ENCODE measurements at regions of chr1 and their contacts with region 1.

Region 1: GRCh38 chr1:212477014-212477679 is 44.4 kb downstream of the NENF start:
- DNase-seq: peak; percentile 96
- H3K4me3 Mint-ChIP-seq: no peak overlapping the region
- H3K27ac Mint-ChIP-seq: peak overlapping the region; percentile 46
- H3K4me1 Mint-ChIP-seq: peaks cover 17% of the 10 kb centered on the region
- H3K27me3 Mint-ChIP-seq: no peaks in the 10 kb centered on the region
- CTCF ChIP-seq: peak; percentile 99

Region 2: GRCh38 chr1:212396638-212397037 is 80.5 kb before region 1 on chr1:
- CTCF ChIA-PET with region 1: no interaction called
- POLR2A ChIA-PET with region 1: no interaction called
- intact Hi-C with region 1: no loop called
- DNase-seq: peak; percentile 24
- H3K4me3 Mint-ChIP-seq: no peak overlapping the region
- H3K27ac Mint-ChIP-seq: no peak overlapping the region
- H3K4me1 Mint-ChIP-seq: no peaks in the 10 kb centered on the region
- H3K27me3 Mint-ChIP-seq: no peaks in the 10 kb centered on the region
- CTCF ChIP-seq: no peak

Region 3: GRCh38 chr1:212437179-212437798 is 39.9 kb before region 1 on chr1:
- CTCF ChIA-PET with region 1: no interaction called
- POLR2A ChIA-PET with region 1: no interaction called
- intact Hi-C with region 1: no loop called
- DNase-seq: peak; percentile 41
- H3K4me3 Mint-ChIP-seq: no peak overlapping the region
- H3K27ac Mint-ChIP-seq: peak overlapping the region; percentile 33
- H3K4me1 Mint-ChIP-seq: peaks cover 38% of the 10 kb centered on the region
- H3K27me3 Mint-ChIP-seq: no peaks in the 10 kb centered on the region
- CTCF ChIP-seq: no peak

Region 4: GRCh38 chr1:212498283-212499040 is 21.3 kb after region 1 on chr1:
- CTCF ChIA-PET with region 1: interaction called, 43 read pairs
- POLR2A ChIA-PET with region 1: interaction called, 3 read pairs
- intact Hi-C with region 1: no loop called
- DNase-seq: peak; percentile 96
- H3K4me3 Mint-ChIP-seq: no peak overlapping the region
- H3K27ac Mint-ChIP-seq: no peak overlapping the region
- H3K4me1 Mint-ChIP-seq: peaks cover 15% of the 10 kb centered on the region
- H3K27me3 Mint-ChIP-seq: no peaks in the 10 kb centered on the region
- CTCF ChIP-seq: no peak

Region 5: GRCh38 chr1:212558693-212559480 is 81.7 kb after region 1 on chr1:
- CTCF ChIA-PET with region 1: interaction called, 18 read pairs
- POLR2A ChIA-PET with region 1: interaction called, 6 read pairs
- intact Hi-C with region 1: loop called (anchors 1 kb)
- DNase-seq: peak; percentile 98
- H3K4me3 Mint-ChIP-seq: peak overlapping the region; percentile 70
- H3K27ac Mint-ChIP-seq: peak overlapping the region; percentile 99
- H3K4me1 Mint-ChIP-seq: peaks cover 16% of the 10 kb centered on the region
- H3K27me3 Mint-ChIP-seq: no peaks in the 10 kb centered on the region
- CTCF ChIP-seq: no peak

Region 6: DNA sequence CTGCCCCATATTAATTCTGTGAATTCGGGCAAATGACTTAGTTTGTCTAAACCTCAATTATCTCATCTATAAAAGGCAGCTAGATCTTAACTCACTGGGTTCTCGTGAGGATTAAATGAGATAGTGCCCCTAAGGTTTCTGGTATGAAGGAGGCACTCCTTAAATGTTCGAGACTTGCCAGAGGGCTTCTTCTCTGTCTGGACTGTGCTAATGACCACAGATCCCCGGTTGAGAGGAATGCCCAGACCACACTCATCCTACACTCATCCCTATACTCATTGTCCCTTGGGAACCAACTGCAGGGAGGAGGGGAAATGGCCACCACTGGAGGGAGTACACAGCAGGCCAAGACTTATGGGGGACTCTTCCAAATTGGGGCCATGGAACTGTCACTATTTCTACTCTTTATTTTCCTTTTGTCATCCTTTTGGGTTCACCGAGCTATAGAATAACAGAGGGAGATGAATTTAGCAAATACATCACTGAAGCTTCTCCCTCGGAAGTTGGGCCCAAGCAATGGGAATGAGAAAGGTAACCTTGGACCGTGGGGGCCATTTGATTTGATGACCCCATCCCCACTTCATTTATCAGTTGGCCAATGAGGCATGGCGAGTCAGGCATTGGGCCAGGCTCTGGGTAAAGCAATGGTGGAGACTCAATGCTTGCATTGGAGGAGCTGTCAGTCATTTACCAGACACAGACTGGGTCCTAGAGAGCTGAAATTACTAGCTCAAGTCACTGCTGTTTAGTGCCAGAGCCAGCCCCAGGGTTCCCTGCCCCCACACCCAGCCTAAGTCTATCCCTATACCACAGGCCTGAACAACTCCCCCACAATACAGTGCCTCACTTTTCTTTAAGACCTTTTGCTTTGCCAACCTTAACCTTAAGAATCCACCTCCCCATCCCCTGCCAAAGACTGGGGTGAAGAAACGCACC is 136.6 kb after region 1 on chr1:
- CTCF ChIA-PET with region 1: interaction called, 33 read pairs
- POLR2A ChIA-PET with region 1: interaction called, 94 read pairs
- intact Hi-C with region 1: loop called (anchors 1 kb)
- DNase-seq: no peak
- H3K4me3 Mint-ChIP-seq: no peak overlapping the region
- H3K27ac Mint-ChIP-seq: no peak overlapping the region
- H3K4me1 Mint-ChIP-seq: peaks cover 19% of the 10 kb centered on the region
- H3K27me3 Mint-ChIP-seq: peaks cover 26% of the 10 kb centered on the region
- CTCF ChIP-seq: no peak

Region 7: GRCh38 chr1:212678456-212679410 is 201.6 kb after region 1 on chr1:
- CTCF ChIA-PET with region 1: interaction called, 19 read pairs
- POLR2A ChIA-PET with region 1: no interaction called
- intact Hi-C with region 1: no loop called
- DNase-seq: no peak
- H3K4me3 Mint-ChIP-seq: no peak overlapping the region
- H3K27ac Mint-ChIP-seq: no peak overlapping the region
- H3K4me1 Mint-ChIP-seq: no peaks in the 10 kb centered on the region
- H3K27me3 Mint-ChIP-seq: no peaks in the 10 kb centered on the region
- CTCF ChIP-seq: no peak

Region 8: DNA sequence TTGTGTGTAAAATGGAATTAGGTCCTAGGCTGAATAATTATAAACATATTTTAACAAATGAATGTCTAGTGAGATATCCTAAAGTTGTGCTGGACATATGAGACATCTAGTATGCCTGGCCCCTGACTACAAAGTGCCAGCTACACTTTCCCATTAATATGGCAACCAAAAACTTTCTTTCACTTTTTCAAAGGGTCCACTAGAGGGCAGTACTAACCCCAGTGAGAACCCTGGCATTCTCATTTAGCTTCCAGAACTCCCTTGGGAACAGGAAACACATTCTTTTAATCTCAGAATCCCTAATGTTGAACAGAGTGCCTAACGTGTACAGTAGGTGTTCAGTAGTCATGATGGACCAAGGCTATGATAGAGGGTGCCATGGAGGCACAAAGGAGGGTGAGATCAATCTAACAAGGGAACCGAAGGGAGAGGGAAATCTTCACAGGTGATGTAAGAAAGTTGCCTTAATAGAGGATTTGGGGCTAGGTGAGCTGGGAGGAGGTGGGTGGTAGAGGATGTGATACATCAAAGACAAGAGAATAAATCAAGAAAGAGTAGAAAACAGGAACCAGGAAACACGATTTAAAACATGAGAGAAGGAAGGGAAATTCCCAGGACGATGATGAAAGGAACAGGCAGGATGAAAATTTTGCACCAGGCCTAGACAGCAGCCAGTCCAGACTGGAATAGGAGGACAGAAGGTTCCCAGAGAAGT is 272.8 kb after region 1 on chr1:
- CTCF ChIA-PET with region 1: interaction called, 91 read pairs
- POLR2A ChIA-PET with region 1: interaction called, 7 read pairs
- intact Hi-C with region 1: no loop called
- DNase-seq: peak; percentile 90
- H3K4me3 Mint-ChIP-seq: peak overlapping the region; percentile 7
- H3K27ac Mint-ChIP-seq: peak overlapping the region; percentile 46
- H3K4me1 Mint-ChIP-seq: peaks cover 19% of the 10 kb centered on the region
- H3K27me3 Mint-ChIP-seq: no peaks in the 10 kb centered on the region
- CTCF ChIP-seq: peak; percentile 96

Region 9: GRCh38 chr1:212857992-212858460 is 380.9 kb after region 1 on chr1 and contains the start of gene FLVCR1:
- CTCF ChIA-PET with region 1: interaction called, 4 read pairs
- POLR2A ChIA-PET with region 1: interaction called, 3 read pairs
- intact Hi-C with region 1: loop called (anchors 5 kb)
- DNase-seq: peak; percentile 100
- H3K4me3 Mint-ChIP-seq: no peak within 1 kb of the TSS
- H3K27ac Mint-ChIP-seq: peak within 1 kb of the TSS; percentile 99
- H3K4me1 Mint-ChIP-seq: peaks cover 11% of the 10 kb centered on the region
- H3K27me3 Mint-ChIP-seq: no peaks in the 10 kb centered on the region
- CTCF ChIP-seq: no peak
- total RNA-seq, gene FLVCR1: 16.5 and 17.9 TPM in 2 replicates